CD14-positive monocyte (primary cell): ENCODE measurements at regions of chr19 and their contacts with region 1.

Region 1: DNA sequence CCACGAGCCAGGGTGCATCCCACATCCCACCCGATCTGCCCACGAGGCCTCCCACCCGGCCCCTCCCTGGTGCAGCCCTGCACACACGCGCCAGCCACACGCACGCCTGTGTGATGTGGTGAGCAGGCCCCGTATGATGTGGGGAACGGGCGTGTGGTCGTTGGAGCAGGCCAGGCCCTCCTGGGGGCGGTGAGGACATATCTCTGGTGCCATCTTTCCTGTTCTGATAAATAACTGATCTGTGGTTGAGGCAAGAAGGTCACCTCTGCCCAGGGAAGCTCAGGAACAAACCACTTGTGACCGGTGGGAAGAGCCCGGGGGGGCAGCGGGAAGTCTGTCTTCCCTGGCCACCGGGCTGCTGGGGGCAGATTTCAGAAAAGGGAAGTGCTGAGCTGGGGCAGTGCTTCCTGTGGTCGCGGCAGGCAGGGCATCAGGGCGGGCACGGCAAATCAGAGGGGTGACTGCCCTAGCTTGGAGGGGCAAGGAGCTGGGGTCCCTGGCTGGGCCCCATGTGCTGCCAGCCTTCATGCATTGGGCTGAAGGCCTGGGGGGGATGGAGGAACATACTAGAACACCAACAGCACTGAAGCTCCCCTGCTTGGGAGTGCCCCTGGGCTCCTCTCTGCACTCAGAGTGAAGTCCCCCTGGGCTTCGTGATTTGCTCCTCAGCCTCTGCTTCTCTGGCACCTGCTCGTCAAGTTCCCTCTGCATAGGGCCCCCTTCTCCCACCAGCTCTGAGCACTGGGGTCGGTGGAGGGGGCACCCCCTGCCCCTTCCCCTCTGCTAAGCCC is 35.2 kb upstream of the SLC7A10 start:
- DNase-seq: peak; percentile 58 to 80 (median 78)
- H3K4me3 ChIP-seq: peak overlapping the region in 2 of 3 experiments; percentile 15 to 67
- H3K4me3 Mint-ChIP-seq: peak overlapping the region; percentile 65 to 88
- H3K27ac ChIP-seq: peak overlapping the region; percentile 75 to 89
- H3K27ac Mint-ChIP-seq: peak overlapping the region; percentile 87 to 96 (median 94)
- H3K4me1 ChIP-seq: peaks cover 55 to 62% of the 10 kb centered on the region in 2 donors
- H3K4me1 Mint-ChIP-seq: peaks cover 63% of the 10 kb centered on the region
- H3K27me3 ChIP-seq: no peaks in the 10 kb centered on the region
- H3K27me3 Mint-ChIP-seq: peaks cover 0 to 4% (median 0%) of the 10 kb centered on the region in 3 donors
- CTCF ChIP-seq: no peak

Region 2: DNA sequence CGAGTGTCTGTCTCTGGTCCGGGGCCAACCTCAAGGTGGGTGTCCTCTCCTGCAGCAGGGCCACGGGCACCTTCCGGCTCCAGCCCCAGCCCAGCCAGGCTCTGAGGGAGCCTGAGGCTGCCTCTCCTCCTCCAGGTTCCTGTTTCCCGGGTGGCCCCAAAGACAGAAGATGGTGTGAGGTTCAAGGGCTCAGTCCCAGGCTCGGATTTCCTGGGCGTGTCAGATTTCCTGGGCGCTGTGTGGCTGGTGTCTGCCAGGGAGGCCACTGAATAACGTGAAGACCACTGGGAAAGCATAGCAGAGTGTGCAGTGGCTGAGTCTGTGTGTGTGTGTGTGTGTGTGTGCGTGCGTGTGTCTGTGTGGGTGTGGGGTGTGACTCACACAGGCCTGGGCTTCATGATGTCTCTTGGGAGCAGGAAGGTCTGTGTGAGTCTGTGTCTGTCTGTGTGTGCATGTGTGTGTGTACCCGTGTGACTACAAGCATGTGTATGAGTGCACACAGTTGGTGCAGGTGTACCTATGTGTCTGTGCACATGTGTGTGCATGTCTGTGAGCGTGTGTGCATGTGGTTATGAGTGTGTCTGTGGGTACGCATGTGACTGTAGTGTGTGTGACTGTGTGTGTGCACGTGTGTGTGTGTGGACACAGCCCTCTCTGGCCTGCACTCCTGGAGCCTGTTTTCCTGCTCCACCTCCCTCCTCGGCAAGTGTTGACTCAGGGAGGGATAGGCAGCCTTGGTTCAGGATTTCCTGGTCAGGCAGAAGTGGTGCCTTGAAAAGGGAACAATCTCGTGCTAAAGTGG is 13.3 kb after region 1 on chr19:
- intact Hi-C with region 1: no loop called
- DNase-seq: peak; percentile 85 to 93 (median 86)
- H3K4me3 ChIP-seq: peak overlapping the region in 1 of 3 experiments; percentile 25
- H3K4me3 Mint-ChIP-seq: peak overlapping the region; percentile 50 to 82
- H3K27ac ChIP-seq: peak overlapping the region; percentile 67 to 82
- H3K27ac Mint-ChIP-seq: peak overlapping the region; percentile 83 to 95 (median 90)
- H3K4me1 ChIP-seq: peaks cover 56 to 69% of the 10 kb centered on the region in 2 donors
- H3K4me1 Mint-ChIP-seq: peaks cover 49% of the 10 kb centered on the region
- H3K27me3 ChIP-seq: no peaks in the 10 kb centered on the region
- H3K27me3 Mint-ChIP-seq: peaks cover 0 to 2% (median 1%) of the 10 kb centered on the region in 3 donors
- CTCF ChIP-seq: no peak

Region 3: DNA sequence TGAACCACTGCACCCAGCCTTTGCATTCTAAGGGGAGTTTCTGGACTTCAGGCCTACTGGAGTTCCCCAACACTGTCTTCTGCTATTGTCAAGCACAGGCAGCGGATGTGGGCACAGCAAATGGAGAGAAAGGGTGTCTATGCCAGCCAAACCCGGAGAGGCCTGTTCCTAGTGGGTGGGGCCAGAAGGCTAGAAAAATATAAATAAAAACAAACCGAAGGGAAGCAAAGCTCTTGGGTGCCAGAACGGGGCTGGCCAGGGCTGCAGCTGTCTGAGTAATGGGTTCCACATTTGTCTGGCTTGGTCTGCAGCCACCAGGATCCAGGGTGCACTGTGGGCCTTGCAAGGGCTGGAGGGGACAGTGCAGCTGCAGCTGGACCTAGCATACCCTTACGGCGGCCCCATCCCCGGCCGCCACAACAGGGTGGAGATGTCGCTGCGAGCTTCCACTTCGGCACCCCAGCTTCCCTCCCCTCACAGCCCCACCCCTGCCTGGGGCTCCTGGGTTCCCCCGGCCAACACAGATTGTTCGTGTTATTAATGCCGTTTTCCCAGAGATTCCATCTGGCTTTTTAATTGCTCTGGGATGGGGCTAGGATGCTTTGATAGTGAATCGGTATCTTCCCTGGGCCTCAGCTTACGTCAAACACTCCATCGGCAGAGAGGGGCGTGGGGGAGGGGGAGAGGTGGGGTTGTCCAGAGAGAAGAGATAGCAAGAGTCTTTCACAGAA is 35.6 kb after region 1 on chr19:
- intact Hi-C with region 1: loop called (anchors 5 kb)
- DNase-seq: peak in 1 of 3 donors; percentile 54
- H3K4me3 ChIP-seq: peak overlapping the region in 1 of 3 experiments; percentile 39
- H3K4me3 Mint-ChIP-seq: peak overlapping the region in 1 of 2 donors; percentile 6
- H3K27ac ChIP-seq: peak overlapping the region; percentile 19 to 36
- H3K27ac Mint-ChIP-seq: peak overlapping the region; percentile 20 to 81 (median 63)
- H3K4me1 ChIP-seq: peaks cover 86 to 89% of the 10 kb centered on the region in 2 donors
- H3K4me1 Mint-ChIP-seq: peaks cover 86% of the 10 kb centered on the region
- H3K27me3 ChIP-seq: no peaks in the 10 kb centered on the region
- H3K27me3 Mint-ChIP-seq: peaks cover 0 to 2% (median 1%) of the 10 kb centered on the region in 3 donors
- CTCF ChIP-seq: no peak

Region 4: GRCh38 chr19:33447336-33448158 is 186.7 kb after region 1 on chr19:
- intact Hi-C with region 1: no loop called
- DNase-seq: no peak
- H3K4me3 ChIP-seq: no peak overlapping the region
- H3K4me3 Mint-ChIP-seq: no peak overlapping the region
- H3K27ac ChIP-seq: no peak overlapping the region
- H3K27ac Mint-ChIP-seq: no peak overlapping the region
- H3K4me1 ChIP-seq: no peaks in the 10 kb centered on the region
- H3K4me1 Mint-ChIP-seq: no peaks in the 10 kb centered on the region
- H3K27me3 ChIP-seq: no peaks in the 10 kb centered on the region
- H3K27me3 Mint-ChIP-seq: peaks cover 0 to 4% (median 2%) of the 10 kb centered on the region in 3 donors
- CTCF ChIP-seq: no peak